MCF 10A (cell line): ENCODE measurements at regions of chr2 and their contacts with region 1.

Region 1: GRCh38 chr2:218659258-218659987 is at the starts of genes BCS1L and ZNF142:
- DNase-seq: peak; percentile 94
- H3K4me3 Mint-ChIP-seq: peak within 1 kb of the TSS; percentile 92
- H3K27ac Mint-ChIP-seq: peak within 1 kb of the TSS; percentile 82
- H3K4me1 Mint-ChIP-seq: peaks cover 27% of the 10 kb centered on the region
- H3K27me3 Mint-ChIP-seq: no peaks in the 10 kb centered on the region
- CTCF ChIP-seq: no peak
- total RNA-seq, gene BCS1L: 71.1 and 96.0 TPM in 2 replicates
- total RNA-seq, gene ZNF142: 33.7 and 37.8 TPM in 2 replicates

Region 2: GRCh38 chr2:218568190-218569037 is 91.0 kb before region 1 on chr2 and contains the starts of genes CNOT9 and USP37:
- CTCF ChIA-PET with region 1: interaction called, 4 read pairs
- POLR2A ChIA-PET with region 1: interaction called, 12 read pairs
- intact Hi-C with region 1: no loop called
- DNase-seq: peak; percentile 98
- H3K4me3 Mint-ChIP-seq: peak within 1 kb of the TSS; percentile 92
- H3K27ac Mint-ChIP-seq: peak within 1 kb of the TSS; percentile 86
- H3K4me1 Mint-ChIP-seq: peaks cover 40% of the 10 kb centered on the region
- H3K27me3 Mint-ChIP-seq: no peaks in the 10 kb centered on the region
- CTCF ChIP-seq: no peak
- total RNA-seq, gene CNOT9: 64.9 and 66.1 TPM in 2 replicates
- total RNA-seq, gene USP37: 11.6 and 16.4 TPM in 2 replicates

Region 3: DNA sequence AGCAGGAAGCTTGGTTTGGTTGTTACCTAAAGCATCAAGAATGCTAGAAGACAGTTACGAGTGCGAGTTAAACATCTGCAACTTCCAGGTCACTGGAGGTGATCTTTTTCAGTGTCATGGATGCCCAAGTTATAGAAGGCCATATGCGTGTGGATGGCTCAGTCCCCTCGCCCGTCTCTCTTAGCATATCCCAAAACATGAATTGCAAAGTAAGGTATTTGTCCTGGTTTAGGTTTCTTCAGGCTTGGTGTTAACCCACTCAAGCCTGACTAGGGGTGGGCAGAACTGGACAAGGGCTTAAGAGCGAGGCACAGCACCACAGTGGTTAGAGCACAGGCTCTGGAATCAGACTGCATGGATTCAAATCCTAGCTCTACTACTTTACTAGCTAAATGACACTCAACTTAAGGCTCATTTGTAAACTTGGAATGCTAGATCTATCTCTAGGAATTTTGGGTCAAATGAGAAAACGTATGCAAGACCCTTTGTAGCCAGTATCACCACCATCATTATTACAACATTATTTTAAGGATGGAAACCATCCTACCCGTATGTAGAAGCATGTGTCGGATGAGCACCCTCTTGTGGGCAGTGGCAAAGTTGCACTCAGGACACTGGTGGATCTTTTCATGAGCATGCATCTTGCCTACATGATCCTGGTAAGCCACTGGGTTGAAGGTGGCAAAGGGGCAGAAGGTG is 11.2 kb before region 1 on chr2:
- CTCF ChIA-PET with region 1: interaction called, 48 read pairs
- POLR2A ChIA-PET with region 1: interaction called, 8 read pairs
- intact Hi-C with region 1: no loop called
- DNase-seq: peak; percentile 68
- H3K4me3 Mint-ChIP-seq: no peak overlapping the region
- H3K27ac Mint-ChIP-seq: no peak overlapping the region
- H3K4me1 Mint-ChIP-seq: no peaks in the 10 kb centered on the region
- H3K27me3 Mint-ChIP-seq: no peaks in the 10 kb centered on the region
- CTCF ChIP-seq: peak; percentile 67

Region 4: GRCh38 chr2:218691234-218691633 is 31.8 kb after region 1 on chr2:
- CTCF ChIA-PET with region 1: interaction called, 27 read pairs
- POLR2A ChIA-PET with region 1: interaction called, 18 read pairs
- intact Hi-C with region 1: loop called (anchors 1 kb)
- DNase-seq: no peak
- H3K4me3 Mint-ChIP-seq: no peak overlapping the region
- H3K27ac Mint-ChIP-seq: no peak overlapping the region
- H3K4me1 Mint-ChIP-seq: peaks cover 6% of the 10 kb centered on the region
- H3K27me3 Mint-ChIP-seq: no peaks in the 10 kb centered on the region
- CTCF ChIP-seq: no peak

Region 5: DNA sequence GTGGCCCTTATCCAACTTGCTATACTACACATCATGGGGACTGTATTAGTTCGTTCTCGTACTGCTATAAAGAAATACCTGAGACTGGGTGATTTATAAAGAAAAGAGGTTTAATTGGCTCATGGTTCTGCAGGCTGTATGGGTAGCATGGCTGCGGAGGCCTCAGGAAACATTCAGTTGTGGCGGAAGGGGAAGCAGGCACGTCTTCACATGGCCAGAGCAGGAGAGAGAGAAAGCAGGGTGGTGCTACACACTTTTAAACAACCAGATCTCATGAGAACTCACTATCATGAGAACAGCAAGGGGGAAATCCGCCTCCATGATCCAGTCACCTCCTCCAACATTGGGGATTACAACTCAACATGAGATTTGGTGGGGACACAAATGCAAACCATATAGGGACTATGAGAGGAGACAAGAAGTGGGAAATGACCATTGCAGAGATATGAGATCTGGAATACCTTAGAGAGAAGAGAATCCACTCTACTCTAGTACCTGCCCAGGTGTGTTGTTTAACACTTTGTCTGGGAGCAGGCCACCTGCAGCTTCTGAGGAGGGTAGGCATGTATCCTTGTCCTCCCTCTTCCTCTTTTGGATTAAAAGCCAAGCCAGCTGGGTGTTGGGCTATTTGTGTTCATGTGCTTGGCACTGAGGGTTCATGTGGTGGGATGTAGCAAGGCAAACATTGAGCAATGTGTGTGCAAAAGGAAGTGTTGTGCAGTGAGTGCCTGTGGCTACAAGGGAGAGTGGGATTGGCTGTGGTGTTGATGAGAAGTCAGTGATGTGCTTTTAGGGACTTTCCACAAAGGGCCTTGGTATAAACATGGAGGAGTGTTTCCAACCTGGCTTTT is 74.0 kb after region 1 on chr2:
- CTCF ChIA-PET with region 1: no interaction called
- POLR2A ChIA-PET with region 1: interaction called, 9 read pairs
- intact Hi-C with region 1: loop called (anchors 5 kb)
- DNase-seq: peak; percentile 91
- H3K4me3 Mint-ChIP-seq: peak overlapping the region; percentile 38
- H3K27ac Mint-ChIP-seq: peak overlapping the region; percentile 83
- H3K4me1 Mint-ChIP-seq: peaks cover 37% of the 10 kb centered on the region
- H3K27me3 Mint-ChIP-seq: no peaks in the 10 kb centered on the region
- CTCF ChIP-seq: no peak